ENCODE measurements at regions of chr20 and their contacts with region 1.

Region 1: GRCh38 chr20:48823960-48824497 is 3.8 kb downstream of the PREX1 start:
- DNase-seq: no peak
- H3K4me3 ChIP-seq: peak overlapping the region in 1 of 3 donors; percentile 87
- H3K27ac ChIP-seq: peak overlapping the region in 1 of 2 donors; percentile 67
- H3K4me1 ChIP-seq: no peaks in the 10 kb centered on the region
- H3K27me3 ChIP-seq: no peaks in the 10 kb centered on the region
- CTCF ChIP-seq: no peak
- POLR2A ChIP-seq: no peak

Region 2: DNA sequence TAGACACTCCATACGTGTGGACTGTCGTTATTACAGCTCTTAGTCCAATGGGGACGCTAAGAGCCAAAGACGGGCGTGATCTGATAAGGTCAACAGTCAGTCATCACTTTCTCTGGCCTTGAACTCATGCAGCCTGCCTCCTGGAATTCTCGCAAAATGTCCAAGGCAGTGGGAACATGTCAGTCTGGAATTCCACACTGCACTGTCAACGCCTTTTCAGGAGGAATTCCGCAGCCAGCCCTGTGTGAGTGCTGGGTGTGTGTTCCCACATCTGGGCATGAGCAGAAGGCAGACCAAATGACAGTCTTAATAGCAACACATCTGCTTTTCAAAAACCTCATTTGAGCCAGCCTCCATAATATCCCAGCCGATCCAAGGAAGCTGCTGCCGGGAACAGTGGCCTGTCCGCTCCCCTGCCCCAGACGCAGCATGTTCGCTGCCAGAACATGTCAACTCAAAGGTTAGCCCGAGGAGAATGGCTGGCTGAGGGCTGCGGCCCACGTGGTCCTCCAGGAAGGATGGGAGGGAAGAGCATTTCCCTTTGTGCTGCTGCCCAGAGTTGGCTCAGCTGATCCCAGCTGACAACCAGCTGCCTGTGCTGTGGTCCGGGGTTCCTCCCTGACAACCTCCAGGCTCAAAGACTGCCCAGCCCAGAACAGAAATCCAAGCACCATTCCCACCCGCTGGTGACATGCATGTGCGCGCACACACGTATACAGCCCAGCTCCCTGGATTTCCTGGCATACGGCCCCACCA is 1141.8 kb before region 1 on chr20:
- intact Hi-C with region 1: loop called (anchors 5 kb)
- DNase-seq: no peak
- H3K4me3 ChIP-seq: no peak overlapping the region
- H3K27ac ChIP-seq: no peak overlapping the region
- H3K4me1 ChIP-seq: no peaks in the 10 kb centered on the region
- H3K27me3 ChIP-seq: no peaks in the 10 kb centered on the region
- CTCF ChIP-seq: no peak
- POLR2A ChIP-seq: no peak

Region 3: GRCh38 chr20:48118073-48118878 is 705.8 kb before region 1 on chr20:
- intact Hi-C with region 1: no loop called
- DNase-seq: no peak
- H3K4me3 ChIP-seq: no peak overlapping the region
- H3K27ac ChIP-seq: no peak overlapping the region
- H3K4me1 ChIP-seq: no peaks in the 10 kb centered on the region
- H3K27me3 ChIP-seq: no peaks in the 10 kb centered on the region
- CTCF ChIP-seq: no peak
- POLR2A ChIP-seq: no peak

Region 4: DNA sequence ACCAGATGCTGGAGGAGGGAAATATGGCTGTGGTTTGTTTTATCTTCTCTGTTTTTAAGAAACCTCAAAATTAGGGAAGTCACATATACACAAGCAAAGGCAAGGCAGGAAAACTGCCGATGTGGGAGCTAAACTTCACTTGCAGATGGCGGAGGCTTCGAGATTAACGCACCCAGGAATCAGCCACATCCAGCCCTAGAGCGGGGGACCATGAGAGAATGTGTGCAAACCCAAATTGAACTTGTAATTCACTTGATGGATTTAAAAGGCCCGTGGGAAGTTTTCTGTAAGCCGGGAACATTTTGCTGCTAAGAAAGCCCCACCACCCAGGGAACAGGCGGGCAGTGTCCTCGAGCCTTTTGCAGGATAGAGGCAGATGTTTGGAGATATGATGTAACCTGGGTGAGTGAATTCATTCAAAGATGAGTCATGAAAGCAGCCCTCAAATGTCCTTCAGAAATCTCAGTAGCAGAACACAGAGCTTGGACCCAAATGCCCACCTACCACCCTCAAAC is 36.1 kb before region 1 on chr20:
- intact Hi-C with region 1: no loop called
- DNase-seq: no peak
- H3K4me3 ChIP-seq: no peak overlapping the region
- H3K27ac ChIP-seq: peak overlapping the region; percentile 17 to 66
- H3K4me1 ChIP-seq: peaks cover 0 to 7% of the 10 kb centered on the region in 2 donors
- H3K27me3 ChIP-seq: no peaks in the 10 kb centered on the region
- CTCF ChIP-seq: no peak
- POLR2A ChIP-seq: no peak

Region 5: DNA sequence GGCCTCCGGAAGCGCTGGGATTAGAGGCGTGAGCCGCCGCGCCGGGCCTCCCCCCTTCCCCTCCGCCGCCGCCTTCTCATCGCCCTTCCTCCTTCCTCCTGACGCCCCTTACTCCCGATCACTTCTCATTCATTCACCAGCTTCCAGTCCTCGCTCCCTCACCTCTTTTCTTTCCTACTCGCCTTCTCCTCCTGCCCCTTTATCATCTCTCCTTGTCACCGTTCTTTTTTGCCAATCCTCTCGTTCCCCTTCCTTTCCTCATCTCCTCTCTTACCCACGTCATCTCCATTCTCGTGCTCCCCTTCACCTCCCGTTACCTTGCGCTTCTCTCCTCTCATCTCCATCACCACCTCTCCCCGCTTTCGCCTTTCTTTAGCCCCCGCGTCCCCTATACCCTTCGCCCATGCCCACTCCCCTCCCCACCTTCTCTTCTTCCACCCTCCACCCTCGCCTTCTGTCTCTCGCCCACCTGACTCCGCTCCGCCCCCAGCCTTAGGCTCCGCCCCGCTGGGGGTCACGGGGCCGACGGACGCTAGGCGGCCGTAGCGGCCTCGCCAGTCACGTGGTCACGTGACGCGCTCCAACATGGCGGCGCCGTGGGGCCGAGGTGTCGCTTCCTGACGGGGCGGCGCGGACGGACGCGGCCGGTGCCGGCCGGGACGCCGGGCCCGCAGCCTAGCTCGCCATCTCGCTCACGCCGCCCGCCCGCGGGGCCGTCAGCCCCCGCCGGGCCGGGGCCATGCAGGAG is 97.3 kb after region 1 on chr20 and contains the start of gene ARFGEF2:
- intact Hi-C with region 1: no loop called
- DNase-seq: peak; percentile 90 to 93
- H3K4me3 ChIP-seq: peak within 1 kb of the TSS; percentile 80 to 100 (median 96)
- H3K27ac ChIP-seq: peak within 1 kb of the TSS; percentile 98 to 100
- H3K4me1 ChIP-seq: peaks cover 0 to 10% of the 10 kb centered on the region in 2 donors
- H3K27me3 ChIP-seq: no peaks in the 10 kb centered on the region
- CTCF ChIP-seq: peak; percentile 28 to 54 (median 33)
- POLR2A ChIP-seq: peak; percentile 96
- total RNA-seq, gene ARFGEF2: 37.1 to 61.6 (median 42.3) TPM

Measured in breast epithelium (tissue), 4 donors.